Dorsolateral prefrontal cortex (tissue), 120 donors: ENCODE measurements at regions of chr12 and their contacts with region 1.

Region 1: DNA sequence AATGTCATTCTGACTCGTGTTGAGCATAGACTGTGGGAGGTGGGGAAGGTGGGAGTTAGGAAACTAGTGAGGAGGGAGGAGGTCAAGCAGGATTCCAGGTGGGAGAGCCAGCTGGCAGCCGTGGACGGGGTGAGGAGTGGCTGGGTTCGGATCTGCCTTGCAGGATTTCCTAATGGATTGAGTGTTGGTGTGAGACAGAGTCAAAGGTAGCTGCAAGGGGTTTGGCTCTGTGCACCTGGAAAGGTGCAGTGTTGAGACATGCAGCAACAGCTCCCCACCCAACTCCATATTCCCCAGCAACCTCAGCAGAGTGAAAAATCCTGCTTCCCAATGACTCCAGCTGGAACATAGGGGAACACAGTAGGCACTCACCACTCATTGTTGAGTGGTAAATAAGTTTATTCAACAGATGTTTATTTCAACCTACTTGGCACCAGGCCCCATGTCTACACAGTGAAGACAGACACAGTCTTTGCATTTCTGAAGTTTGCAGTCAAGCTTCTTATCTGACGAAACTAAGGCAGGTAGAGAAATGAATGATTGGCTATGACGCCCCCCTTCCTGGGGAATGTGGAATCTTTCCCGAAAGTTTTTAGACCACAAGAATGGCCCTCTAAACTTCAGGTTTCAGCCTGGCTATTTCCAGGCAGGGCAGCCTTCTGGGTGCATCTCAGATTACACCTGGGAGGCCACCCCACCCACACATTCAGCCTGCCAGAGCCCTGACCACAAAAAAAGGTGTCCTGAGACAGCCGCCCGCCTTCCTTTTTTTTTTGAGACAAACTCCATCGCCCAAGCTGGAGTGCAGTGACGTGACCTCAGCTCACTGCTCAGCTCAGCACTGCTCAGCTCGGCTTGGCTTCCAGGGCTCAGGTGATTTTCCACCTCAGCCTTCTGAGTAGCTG is 37.9 kb upstream of the PLEKHG6 start:
- DNase-seq: peak in 1 of 10 donors; percentile 10
- H3K4me3 ChIP-seq: no peak overlapping the region
- H3K27ac ChIP-seq: no peak overlapping the region
- H3K27me3 ChIP-seq: no peaks in the 10 kb centered on the region
- CTCF ChIP-seq: no peak

Region 2: GRCh38 chr12:6230321-6231110 is 42.0 kb before region 1 on chr12:
- intact Hi-C with region 1: loop called (anchors 5 kb)
- DNase-seq: peak; percentile 48 to 97 (median 90)
- H3K4me3 ChIP-seq: peak overlapping the region in 29 of 59 donors; percentile 1 to 44 (median 21)
- H3K27ac ChIP-seq: peak overlapping the region; percentile 74 to 100 (median 97)
- H3K27me3 ChIP-seq: no peaks in the 10 kb centered on the region
- CTCF ChIP-seq: peak in 9 of 56 donors; percentile 7 to 21 (median 13)

Region 3: GRCh38 chr12:6241495-6241894 is 31.1 kb before region 1 on chr12:
- intact Hi-C with region 1: loop called (anchors 2 to 5 kb)
- DNase-seq: no peak
- H3K4me3 ChIP-seq: no peak overlapping the region
- H3K27ac ChIP-seq: peak overlapping the region in 16 of 59 donors; percentile 5 to 66 (median 28)
- H3K27me3 ChIP-seq: no peaks in the 10 kb centered on the region
- CTCF ChIP-seq: no peak